Activated naive CD4-positive, alpha-beta T cell treated with anti-CD3 and anti-CD28 coated beads for 36 hours (primary cell): ENCODE measurements at regions of chr4 and their contacts with region 1.

Region 1: GRCh38 chr4:122577808-122578781 is 42.8 kb downstream of the IL21 start:
- DNase-seq: peak; percentile 88
- H3K4me3 Mint-ChIP-seq: peak overlapping the region; percentile 65
- H3K27ac Mint-ChIP-seq: peak overlapping the region; percentile 99
- H3K4me1 Mint-ChIP-seq: peaks cover 76% of the 10 kb centered on the region
- H3K27me3 Mint-ChIP-seq: no peaks in the 10 kb centered on the region

Region 2: DNA sequence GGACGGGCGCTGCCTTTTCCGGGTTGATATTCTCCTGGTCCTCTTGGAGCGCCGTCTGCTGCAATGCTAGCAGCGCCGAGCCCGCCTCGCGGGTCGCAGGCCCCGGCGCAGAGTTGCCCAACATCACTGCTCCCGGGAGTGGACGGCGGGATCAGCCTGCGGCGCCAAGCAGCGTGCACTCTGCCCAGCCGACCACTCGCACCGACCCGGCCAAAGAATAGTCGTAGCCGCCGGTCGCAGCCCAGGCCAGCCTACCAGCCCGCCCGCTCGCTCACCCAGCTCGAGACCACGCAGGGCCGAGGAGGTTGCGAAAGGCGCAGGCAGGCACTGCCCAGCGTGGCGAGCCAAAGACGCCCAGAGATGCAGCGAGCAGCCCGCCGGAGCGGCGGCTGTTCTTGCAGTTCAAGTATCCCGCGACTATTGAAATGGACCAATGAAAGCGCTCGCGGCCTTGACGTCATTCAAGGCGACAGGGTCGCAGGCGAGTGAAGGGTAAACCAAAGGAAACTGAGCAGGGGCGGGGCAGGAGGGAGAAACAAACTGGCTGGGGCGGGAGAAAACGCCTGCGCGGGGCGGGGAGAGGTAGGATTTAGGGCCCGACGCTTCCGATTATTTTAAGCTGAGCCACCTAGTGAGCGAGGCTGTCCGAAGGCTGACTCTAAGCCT is 754.5 kb before region 1 on chr4 and contains the start of gene CCNA2:
- CTCF ChIA-PET with region 1: interaction called, 3 read pairs
- intact Hi-C with region 1: loop called (anchors 5 kb)
- DNase-seq: peak; percentile 99
- H3K4me3 Mint-ChIP-seq: peak within 1 kb of the TSS; percentile 98
- H3K27ac Mint-ChIP-seq: peak within 1 kb of the TSS; percentile 86
- H3K4me1 Mint-ChIP-seq: peaks cover 20% of the 10 kb centered on the region
- H3K27me3 Mint-ChIP-seq: no peaks in the 10 kb centered on the region
- total RNA-seq, gene CCNA2: 133 to 138 TPM

Region 3: GRCh38 chr4:122003335-122003734 is 574.8 kb before region 1 on chr4:
- CTCF ChIA-PET with region 1: interaction called, 6 read pairs
- intact Hi-C with region 1: loop called (anchors 1 kb)
- DNase-seq: peak; percentile 39
- H3K4me3 Mint-ChIP-seq: no peak overlapping the region
- H3K27ac Mint-ChIP-seq: no peak overlapping the region
- H3K4me1 Mint-ChIP-seq: no peaks in the 10 kb centered on the region
- H3K27me3 Mint-ChIP-seq: peaks cover 4% of the 10 kb centered on the region

Region 4: GRCh38 chr4:122309988-122310626 is 268.0 kb before region 1 on chr4:
- CTCF ChIA-PET with region 1: interaction called, 21 read pairs
- intact Hi-C with region 1: loop called (anchors 1 kb)
- DNase-seq: no peak
- H3K4me3 Mint-ChIP-seq: no peak overlapping the region
- H3K27ac Mint-ChIP-seq: peak overlapping the region; percentile 57
- H3K4me1 Mint-ChIP-seq: peaks cover 8% of the 10 kb centered on the region
- H3K27me3 Mint-ChIP-seq: no peaks in the 10 kb centered on the region

Region 5: GRCh38 chr4:122542411-122543236 is 35.5 kb before region 1 on chr4:
- CTCF ChIA-PET with region 1: interaction called, 66 read pairs
- intact Hi-C with region 1: loop called (anchors 1 kb)
- DNase-seq: no peak
- H3K4me3 Mint-ChIP-seq: peak overlapping the region; percentile 52
- H3K27ac Mint-ChIP-seq: peak overlapping the region; percentile 100
- H3K4me1 Mint-ChIP-seq: peaks cover 94% of the 10 kb centered on the region
- H3K27me3 Mint-ChIP-seq: no peaks in the 10 kb centered on the region

Region 6: GRCh38 chr4:122716825-122717448 is 138.8 kb after region 1 on chr4:
- CTCF ChIA-PET with region 1: interaction called, 27 read pairs
- intact Hi-C with region 1: loop called (anchors 1 kb)
- DNase-seq: peak; percentile 94
- H3K4me3 Mint-ChIP-seq: no peak overlapping the region
- H3K27ac Mint-ChIP-seq: peak overlapping the region; percentile 65
- H3K4me1 Mint-ChIP-seq: peaks cover 41% of the 10 kb centered on the region
- H3K27me3 Mint-ChIP-seq: no peaks in the 10 kb centered on the region

Region 7: GRCh38 chr4:123536225-123536624 is 958.1 kb after region 1 on chr4:
- CTCF ChIA-PET with region 1: no interaction called
- intact Hi-C with region 1: no loop called
- DNase-seq: no peak
- H3K4me3 Mint-ChIP-seq: no peak overlapping the region
- H3K27ac Mint-ChIP-seq: no peak overlapping the region
- H3K4me1 Mint-ChIP-seq: no peaks in the 10 kb centered on the region
- H3K27me3 Mint-ChIP-seq: no peaks in the 10 kb centered on the region